Mammary epithelial cell (primary cell): ENCODE measurements at regions of chr5 and their contacts with region 1.

Region 1: DNA sequence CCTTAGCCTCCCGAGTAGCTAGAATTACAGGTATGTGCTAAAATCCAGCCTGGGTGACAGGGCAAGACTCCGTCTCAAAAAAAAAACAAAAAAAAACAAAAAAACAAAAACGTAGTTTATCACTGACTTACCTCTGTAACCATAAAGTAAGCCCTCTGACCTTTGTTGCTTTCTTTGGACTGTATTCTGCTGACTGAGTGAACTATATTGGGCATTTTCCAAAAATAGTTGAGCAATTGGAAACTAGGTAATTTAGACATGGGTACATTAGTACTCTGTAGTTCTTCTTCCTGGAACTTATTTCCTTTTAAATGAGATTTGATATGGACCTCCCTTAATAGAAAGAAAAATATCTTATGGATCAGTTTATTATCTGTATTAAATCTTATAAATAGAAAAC is 66.6 kb downstream of the ANKHD1 start:
- DNase-seq: no peak
- H3K4me3 ChIP-seq: no peak overlapping the region
- H3K27ac ChIP-seq: no peak overlapping the region
- H3K4me1 ChIP-seq: no peaks in the 10 kb centered on the region
- H3K27me3 ChIP-seq: no peaks in the 10 kb centered on the region
- CTCF ChIP-seq: no peak

Region 2: GRCh38 chr5:140284013-140284412 is 184.2 kb before region 1 on chr5:
- CTCF ChIA-PET with region 1: no interaction called
- dilution Hi-C with region 1: no loop called
- in situ Hi-C with region 1: no loop called
- intact Hi-C with region 1: no loop called
- DNase-seq: no peak
- H3K4me3 ChIP-seq: no peak overlapping the region
- H3K27ac ChIP-seq: no peak overlapping the region
- H3K4me1 ChIP-seq: no peaks in the 10 kb centered on the region
- H3K27me3 ChIP-seq: no peaks in the 10 kb centered on the region
- CTCF ChIP-seq: no peak

Region 3: DNA sequence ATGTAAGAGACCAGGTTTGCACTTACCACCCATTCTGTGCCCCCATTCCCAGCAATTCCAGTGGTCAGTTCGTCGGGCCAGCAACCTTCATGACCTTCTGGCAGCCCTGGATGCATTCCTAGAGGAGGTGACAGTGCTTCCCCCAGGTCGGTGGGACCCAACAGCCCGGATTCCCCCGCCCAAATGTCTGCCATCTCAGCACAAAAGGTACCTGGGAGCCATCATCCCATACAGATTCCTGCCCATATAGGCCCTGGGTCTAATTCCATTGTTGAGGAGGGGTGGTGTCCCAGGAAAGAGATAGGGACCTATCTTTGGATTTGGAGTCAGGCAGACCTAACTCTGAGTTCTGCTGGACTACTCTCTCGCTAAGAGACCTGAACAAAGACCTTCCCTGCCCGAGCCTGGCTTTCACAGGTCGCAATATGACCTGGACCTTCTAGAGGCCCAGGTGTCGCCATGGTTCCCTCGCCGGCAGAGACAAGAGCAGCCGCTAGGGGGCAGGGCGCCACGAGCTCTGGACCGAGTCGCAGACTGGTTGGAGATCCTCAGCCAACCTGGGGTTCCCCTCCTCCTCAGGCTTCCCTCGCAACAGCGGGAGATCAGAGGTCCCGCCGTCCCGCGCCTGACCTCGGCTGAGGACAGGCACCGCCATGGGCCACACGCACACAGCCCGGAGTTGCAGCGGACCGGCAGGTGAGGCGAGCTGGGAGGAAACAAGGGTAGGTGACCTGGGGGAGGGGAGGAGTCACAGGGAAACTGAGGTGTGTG is 105.1 kb before region 1 on chr5:
- CTCF ChIA-PET with region 1: no interaction called
- dilution Hi-C with region 1: loop called (anchors 5 kb)
- in situ Hi-C with region 1: no loop called
- intact Hi-C with region 1: no loop called
- DNase-seq: peak; percentile 68
- H3K4me3 ChIP-seq: peak overlapping the region in 2 of 3 experiments; percentile 34 to 47
- H3K27ac ChIP-seq: no peak overlapping the region
- H3K4me1 ChIP-seq: peaks cover 27% of the 10 kb centered on the region
- H3K27me3 ChIP-seq: no peaks in the 10 kb centered on the region
- CTCF ChIP-seq: peak; percentile 95 to 96

Region 4: GRCh38 chr5:140639148-140639979 is 171.2 kb after region 1 on chr5 and contains the start of gene TMCO6:
- CTCF ChIA-PET with region 1: no interaction called
- dilution Hi-C with region 1: no loop called
- in situ Hi-C with region 1: no loop called
- intact Hi-C with region 1: no loop called
- DNase-seq: peak; percentile 92
- H3K4me3 ChIP-seq: peak within 1 kb of the TSS; percentile 69 to 78 (median 76)
- H3K27ac ChIP-seq: peak within 1 kb of the TSS; percentile 38
- H3K4me1 ChIP-seq: peaks cover 11% of the 10 kb centered on the region
- H3K27me3 ChIP-seq: no peaks in the 10 kb centered on the region
- CTCF ChIP-seq: peak; percentile 21 to 66
- total RNA-seq, gene TMCO6: 4.0 to 16.5 TPM